Adrenal gland (tissue), 19 donors: ENCODE measurements at regions of chr3 and their contacts with region 1.

Region 1: DNA sequence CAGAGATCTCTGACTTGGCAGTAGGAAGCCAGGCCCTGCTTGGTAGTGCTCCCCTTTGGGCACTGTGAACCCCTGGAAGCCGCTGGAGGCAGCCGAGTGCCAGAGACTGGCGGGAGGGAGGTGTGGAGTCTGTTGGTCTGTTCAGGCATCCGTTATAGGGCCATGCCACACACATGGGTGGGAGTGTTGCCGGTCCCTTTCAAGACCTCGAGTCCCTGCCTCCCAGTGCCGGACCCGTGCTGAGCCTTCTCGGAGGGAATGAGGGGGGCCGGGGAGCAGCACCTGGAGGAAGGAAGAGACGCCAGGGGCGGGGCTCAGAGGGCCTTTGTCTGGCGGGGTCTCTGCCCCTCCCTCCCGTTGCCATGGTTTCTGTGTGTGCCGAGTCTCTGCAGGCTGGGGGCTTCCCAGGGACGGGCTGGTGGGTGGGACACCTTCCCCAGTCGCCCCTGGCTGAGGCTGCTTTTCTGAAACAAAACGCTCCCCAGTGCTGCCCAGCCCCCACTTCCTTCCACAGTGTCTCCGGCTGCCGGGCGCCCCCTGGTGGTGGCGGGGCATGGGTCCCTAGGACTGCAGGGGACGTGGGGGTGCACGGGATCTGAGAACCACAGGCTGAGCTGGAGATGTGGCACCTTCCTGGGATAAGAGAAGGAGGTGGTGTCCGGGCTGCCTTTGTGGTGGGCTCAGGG is 10.0 kb downstream of the GNAI2 start:
- DNase-seq: peak; percentile 86 to 95 (median 91)
- H3K4me3 ChIP-seq: peak overlapping the region in 2 of 4 donors; percentile 14 to 50
- H3K27ac ChIP-seq: peak overlapping the region in 4 of 5 donors; percentile 54 to 86 (median 72)
- H3K4me1 ChIP-seq: peaks cover 43 to 98% of the 10 kb centered on the region in 2 donors
- H3K27me3 ChIP-seq: no peaks in the 10 kb centered on the region
- CTCF ChIP-seq: peak; percentile 95 to 98 (median 97)
- POLR2A ChIP-seq: no peak

Region 2: DNA sequence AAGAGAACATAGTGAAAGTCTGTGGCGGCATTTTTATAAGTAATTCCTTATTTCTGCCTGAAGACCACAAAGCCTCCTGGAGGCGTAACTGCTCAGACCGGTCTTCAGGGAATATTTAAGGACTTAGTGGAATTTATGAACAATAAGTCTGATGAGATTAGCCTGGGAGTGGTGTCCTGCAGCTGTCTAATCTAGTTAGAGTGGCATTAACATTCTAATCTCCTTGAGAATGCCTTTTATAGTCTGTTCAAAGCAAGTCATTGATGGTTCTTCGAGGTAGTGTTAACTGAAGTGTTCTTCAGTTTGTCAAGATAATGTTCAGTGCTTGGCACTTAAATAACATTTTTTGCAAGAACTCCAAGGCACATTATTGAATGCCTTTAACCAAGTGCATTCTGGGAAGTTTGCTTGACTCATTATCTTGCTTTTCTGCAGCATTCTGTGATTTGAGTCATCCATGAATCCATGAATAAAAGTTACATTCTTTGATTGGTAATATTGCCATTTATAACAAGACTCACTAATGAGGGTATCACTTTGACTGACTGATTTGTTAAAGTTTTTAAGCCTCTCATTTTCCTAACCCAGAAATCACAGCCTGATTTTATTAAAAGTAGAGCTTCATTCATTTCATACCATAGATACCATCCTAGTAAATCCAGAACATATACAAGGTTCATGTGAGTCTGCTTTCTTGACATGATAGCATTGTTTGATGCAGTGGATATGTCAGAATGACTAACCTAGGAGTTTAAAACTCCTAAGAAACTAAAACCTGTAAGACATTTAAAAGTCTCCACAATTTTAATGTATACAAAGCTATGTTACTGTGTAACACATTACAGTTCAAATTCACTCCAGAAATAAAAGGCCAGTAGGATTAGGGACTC is 144.8 kb before region 1 on chr3:
- intact Hi-C with region 1: no loop called
- DNase-seq: no peak
- H3K4me3 ChIP-seq: no peak overlapping the region
- H3K27ac ChIP-seq: no peak overlapping the region
- H3K4me1 ChIP-seq: no peaks in the 10 kb centered on the region
- H3K27me3 ChIP-seq: no peaks in the 10 kb centered on the region
- CTCF ChIP-seq: no peak
- POLR2A ChIP-seq: no peak

Region 3: DNA sequence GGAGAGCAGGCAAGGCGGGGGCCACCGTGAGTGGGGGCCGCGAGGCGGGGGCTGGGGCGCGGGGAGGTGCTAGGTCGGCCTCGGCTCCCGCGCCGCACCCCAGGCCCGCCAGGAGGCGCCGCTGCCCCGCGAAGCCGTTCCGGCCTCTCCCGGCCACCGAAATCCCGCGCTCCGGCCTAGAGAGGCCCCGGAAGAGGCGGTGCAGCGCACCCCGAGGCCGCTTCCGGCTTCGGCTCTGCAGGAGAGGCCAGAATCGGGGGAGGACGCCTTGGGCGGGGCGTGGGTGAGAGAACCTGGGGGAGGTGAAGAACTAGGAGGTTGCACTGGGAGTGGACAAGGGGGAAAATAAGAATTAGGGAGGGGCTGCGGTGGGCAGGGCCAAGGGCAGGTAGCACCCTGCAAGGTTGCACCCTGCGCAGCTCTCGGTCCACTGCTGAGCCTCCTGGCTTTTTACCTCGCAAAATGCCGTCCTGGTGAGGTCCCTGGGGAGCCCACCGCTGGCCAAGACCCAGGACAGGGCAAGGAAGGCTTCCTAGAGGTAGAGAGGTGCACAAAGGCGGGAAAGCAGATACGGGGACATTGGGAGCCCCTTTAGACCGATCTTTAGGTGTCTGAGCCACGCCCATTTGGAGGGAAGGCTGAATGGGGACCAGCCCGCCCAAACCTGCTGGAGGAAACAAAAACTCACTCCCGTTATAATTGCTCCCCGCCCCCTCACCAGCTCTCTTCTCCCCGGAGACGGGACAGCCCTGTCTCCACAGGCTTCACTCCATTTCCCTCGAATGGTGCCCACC is 18.4 kb before region 1 on chr3:
- intact Hi-C with region 1: loop called (anchors 1 to 2 kb)
- DNase-seq: peak; percentile 87 to 91 (median 90)
- H3K4me3 ChIP-seq: peak overlapping the region; percentile 32 to 82 (median 66)
- H3K27ac ChIP-seq: peak overlapping the region in 3 of 5 donors; percentile 6 to 49 (median 48)
- H3K4me1 ChIP-seq: peaks cover 0 to 16% of the 10 kb centered on the region in 2 donors
- H3K27me3 ChIP-seq: no peaks in the 10 kb centered on the region
- CTCF ChIP-seq: peak; percentile 47 to 93 (median 76)
- POLR2A ChIP-seq: peak in 1 of 2 donors; percentile 25

Region 4: DNA sequence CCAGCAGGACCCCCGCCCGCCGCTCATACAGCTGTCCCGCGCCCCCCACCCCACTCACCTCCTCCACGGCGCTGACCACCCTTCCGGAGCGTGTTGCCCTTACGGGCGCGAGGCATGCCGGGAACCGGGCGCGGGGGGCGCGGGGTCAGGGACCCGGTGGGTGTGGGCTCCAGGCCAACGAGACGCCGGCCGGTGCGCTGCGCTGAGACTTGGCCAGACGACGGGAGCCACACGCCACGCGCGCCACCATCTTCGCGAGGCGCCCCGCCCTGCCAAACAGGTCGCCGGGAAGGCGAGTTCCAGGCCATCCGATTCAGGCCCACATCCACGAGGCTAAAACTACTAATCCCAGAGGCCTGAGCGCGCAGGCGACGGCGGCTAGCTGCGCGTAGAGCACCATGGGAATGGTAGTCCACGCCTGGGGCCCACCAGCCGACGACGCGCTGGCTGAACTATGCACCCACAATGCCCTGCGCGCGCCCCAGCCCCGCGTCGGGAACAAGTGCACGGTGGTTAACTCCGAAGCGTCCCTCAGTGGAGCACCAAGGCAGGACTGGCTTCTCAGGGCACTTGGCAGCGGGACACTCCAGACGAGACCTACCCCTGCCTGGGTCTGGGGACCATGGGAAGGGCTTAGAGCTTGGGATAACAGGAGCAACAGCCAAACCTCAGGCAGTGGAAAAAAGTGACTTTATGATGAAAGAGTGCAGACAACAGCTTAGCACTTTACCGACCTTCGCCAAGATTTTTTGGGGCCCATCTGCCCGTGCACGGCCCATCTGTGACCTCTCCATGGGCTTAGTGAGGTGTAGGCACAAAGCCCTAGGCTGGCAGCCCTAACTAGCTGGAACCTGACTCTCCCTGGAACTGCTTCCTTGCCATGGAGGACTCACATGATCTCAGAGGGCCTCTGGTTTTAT is 46.4 kb after region 1 on chr3 and contains the start of gene IFRD2:
- intact Hi-C with region 1: no loop called
- DNase-seq: peak; percentile 95 to 99 (median 98)
- H3K4me3 ChIP-seq: peak within 1 kb of the TSS; percentile 3 to 84 (median 78)
- H3K27ac ChIP-seq: peak within 1 kb of the TSS; percentile 23 to 92 (median 82)
- H3K4me1 ChIP-seq: peaks cover 19 to 21% of the 10 kb centered on the region in 2 donors
- H3K27me3 ChIP-seq: no peaks in the 10 kb centered on the region
- CTCF ChIP-seq: no peak
- POLR2A ChIP-seq: peak in 1 of 2 donors; percentile 88
- total RNA-seq, gene IFRD2: 31.6 to 96.3 (median 52.8) TPM